Sciatic nerve (tissue), 2 donors: ENCODE measurements at regions of chr2 and their contacts with region 1.

Region 1: DNA sequence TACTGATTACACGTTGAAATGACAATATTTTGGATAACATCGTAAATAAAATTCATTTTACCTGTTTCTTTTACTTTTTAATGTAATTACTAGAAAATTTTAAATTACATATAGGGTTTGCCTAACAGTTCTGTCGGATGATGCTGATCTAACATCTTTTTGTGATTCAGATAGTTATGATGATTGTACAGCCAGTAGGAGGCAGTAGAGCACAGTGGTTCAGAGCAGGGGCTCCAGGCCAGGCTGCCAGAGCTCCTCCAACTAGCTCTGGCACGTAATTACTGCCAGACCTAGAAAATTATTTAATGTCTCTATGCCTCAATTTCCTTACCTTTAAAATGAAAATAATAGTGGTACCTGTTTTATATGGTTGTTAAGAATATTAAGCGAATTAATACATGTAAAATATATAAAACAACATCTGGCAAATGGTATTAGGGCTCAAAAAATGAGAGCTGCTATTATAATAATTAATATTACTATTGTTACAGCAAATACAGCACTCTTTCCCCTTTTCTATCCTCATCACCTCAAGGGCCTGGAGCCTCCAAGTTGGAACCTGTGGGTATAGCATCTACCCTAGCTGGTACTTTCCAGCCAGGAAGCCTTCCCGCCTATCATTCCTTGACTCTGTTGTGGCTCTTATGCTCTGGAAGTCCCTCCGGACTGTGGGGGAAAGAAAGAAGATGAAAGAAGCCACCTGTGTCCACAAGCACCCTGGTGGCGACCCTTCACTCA is 47.7 kb upstream of the PLA2R1 start:
- DNase-seq: no peak
- ATAC-seq: peak; percentile 92

Region 2: GRCh38 chr2:160252278-160252887 is 142.3 kb after region 1 on chr2:
- intact Hi-C with region 1: loop called (anchors 10 kb)
- DNase-seq: no peak
- ATAC-seq: peak; percentile 59

Region 3: DNA sequence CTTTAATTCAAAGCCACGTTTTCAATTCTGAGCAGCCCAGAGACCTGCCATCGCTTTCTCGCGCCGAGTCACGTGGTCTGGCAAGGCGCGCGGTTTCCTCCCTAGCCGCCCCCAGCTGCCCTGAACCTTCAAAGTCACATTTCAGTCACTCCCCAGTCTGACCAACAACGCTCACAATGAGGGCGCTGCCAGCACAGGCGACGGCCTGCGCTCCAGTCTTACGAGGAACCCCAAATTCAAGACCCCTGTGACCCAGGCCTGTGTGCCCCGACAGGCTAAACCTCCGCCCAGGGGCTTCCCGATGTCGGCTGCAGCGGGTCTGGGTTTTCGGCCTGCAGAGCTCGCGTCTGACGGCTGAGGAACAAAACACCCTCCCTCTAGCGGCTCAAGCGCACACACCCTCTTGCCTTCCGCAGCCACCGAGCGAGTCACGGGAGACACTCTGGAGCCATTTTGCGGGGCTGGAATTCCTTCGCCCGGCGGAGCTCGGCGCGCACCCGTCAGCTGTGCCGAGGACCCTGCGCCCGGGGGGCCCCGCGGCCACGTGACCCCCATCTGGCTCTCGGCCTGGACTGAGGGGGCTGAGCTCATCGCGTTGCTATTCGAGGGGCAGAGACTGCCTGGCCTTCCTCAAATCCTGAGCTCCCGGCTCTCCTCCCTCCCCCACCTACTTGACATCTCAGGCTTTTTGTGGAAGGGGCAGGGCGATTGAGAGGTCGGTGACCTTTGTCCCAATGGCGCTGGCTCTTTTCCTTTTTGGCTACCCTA is 159.9 kb after region 1 on chr2:
- intact Hi-C with region 1: no loop called
- DNase-seq: peak; percentile 92
- ATAC-seq: peak; percentile 96

Region 4: DNA sequence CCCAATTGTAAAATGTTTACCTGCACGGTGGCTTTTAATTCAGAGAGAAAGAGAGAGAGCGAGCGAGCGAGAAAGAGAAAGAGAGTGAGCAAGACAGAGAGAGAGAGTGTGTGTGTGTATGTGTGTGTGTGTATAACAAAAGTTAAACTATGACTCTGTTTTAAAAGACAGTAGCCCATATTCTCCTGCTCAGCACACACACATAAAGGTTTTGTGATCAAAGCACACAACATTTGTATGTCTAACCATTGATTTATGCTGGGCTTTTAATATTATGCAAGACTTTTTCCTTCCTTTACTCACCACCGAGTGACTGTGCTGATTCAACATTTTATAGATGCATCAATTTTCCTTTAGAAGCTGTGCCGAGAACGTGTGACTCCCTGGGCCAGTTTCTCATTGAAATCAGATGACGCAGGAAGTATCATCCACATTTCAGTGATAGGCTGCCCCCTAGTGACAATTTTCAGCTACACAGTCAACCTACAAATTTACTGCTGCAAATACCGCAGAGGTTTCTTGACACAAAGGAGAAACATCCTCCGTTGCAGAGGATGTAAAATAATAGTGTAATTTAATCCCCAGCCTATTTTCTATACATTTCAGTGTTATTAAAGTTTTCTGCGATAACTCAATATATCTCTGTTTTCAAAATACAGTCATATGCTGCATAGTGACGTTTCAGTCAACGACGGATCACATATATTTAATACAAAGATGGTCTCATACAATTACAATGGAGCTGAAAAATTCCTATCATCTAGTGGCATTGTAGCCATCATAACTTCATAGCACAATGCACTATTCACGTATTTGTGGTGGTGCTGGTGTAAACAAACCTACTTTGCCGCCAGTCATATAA is 884.3 kb after region 1 on chr2:
- intact Hi-C with region 1: loop called (anchors 10 kb)
- DNase-seq: peak; percentile 71
- ATAC-seq: peak; percentile 93